Dorsolateral prefrontal cortex (tissue), 120 donors: ENCODE measurements at regions of chr14 and their contacts with region 1.

Region 1: DNA sequence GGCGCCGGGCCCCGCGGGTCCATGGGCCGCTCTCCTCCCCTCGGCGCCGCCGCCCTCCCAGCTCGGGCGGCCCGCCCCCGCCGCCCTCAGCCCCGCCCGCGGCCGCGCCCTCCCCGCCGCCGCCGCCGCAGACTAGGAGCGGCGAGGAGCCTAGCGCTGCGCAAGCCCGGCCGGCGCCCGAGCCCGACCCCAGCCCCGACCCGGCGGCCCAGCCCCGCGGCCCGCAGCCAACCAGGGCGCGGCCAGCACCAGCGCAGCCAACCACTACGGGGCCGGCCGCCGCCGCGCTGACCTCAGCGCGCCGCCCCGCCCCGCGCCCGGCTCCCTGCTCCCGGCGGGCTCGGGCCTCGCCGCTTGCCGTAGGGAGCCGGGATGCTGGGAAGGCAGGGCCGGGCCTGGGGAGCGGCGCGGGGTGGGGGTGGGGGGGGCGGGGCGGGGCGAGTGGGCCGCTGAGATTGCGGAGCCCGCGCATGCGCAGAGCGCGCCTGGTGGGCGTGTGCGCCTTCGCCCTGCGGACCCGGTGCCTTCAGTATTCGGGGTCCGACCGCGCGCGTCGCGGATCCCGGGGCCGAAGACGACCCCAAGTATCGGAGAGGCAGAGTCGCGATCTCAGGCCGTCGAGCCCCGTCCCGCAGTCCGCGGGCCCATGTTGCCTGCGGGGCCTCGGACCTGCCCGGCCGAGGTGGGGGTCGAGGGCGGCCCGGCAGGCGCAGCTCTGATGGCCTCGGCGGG is at the start of gene CDC42BPB:
- DNase-seq: peak; percentile 64 to 93 (median 82)
- H3K4me3 ChIP-seq: peak within 1 kb of the TSS; percentile 81 to 100 (median 95)
- H3K27ac ChIP-seq: peak within 1 kb of the TSS; percentile 51 to 94 (median 86)
- H3K27me3 ChIP-seq: no peaks in the 10 kb centered on the region
- CTCF ChIP-seq: peak in 21 of 56 donors; percentile 5 to 40 (median 17)
- total RNA-seq, gene CDC42BPB: 112 to 178 (median 140) TPM

Region 2: DNA sequence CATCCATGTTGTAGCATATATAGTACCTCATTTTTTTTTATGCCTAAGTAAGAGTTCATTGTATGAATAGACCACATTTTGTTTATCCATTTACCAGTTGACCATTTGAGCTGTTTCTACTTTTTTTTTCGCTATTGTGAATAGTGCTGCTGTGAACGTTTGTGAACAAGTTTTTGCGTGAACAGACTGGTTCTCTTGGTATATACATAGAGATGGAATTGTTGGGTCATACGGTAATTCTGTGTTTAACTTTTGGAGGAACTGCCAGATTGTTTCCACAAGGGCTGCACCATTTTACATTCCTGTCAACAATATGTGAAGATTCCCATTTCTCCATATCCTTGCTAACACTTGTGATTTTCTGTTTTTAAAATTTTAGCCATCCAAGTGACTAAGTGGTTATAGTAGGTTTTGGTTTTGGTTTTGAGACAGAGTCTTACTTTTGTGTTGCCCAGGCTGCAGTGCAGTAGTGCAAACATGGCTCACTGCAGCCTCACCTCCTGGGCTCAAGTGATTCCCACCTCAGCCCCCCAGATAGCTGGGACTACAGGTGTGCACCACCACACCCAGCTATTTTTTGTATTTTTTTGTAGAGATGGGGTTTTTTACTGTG is 203.3 kb before region 1 on chr14:
- intact Hi-C with region 1: no loop called
- DNase-seq: no peak
- H3K4me3 ChIP-seq: no peak overlapping the region
- H3K27ac ChIP-seq: no peak overlapping the region
- H3K27me3 ChIP-seq: no peaks in the 10 kb centered on the region
- CTCF ChIP-seq: no peak

Region 3: DNA sequence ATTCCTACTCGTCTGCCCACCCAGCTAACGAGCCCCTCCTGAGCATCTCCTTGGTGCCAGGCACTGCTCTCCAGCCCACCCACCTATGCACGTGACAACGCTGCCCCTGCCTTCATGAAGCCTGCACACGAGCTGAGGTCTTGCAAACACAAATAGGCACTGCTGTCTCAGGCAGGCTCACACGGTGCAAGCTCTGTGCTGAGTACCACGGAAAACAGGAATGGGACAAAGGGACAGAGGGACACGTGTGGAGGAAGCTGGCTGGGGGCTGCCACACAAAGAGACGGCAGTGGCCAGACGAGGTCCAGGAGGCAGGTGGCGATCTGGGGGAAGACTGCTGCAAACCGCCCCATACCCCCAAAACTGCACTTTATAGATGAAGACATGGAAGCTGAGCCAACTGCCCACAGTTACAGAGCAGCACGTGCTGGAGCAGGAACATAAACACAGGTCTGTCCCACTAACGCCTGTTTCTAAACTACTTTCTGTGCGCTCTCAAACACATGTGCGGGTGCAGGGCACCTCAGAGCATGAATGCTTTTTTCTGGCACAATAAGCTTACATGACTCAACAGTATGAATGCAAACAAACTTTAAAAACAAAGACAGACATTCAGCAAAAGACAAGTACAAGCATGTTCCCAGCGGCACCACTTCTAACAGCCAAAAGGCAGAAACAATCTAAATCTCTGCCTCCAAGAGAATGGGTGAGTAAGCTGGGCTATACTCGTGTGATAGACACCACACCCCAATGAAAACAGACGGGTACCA is 70.5 kb before region 1 on chr14:
- intact Hi-C with region 1: loop called (anchors 1 to 5 kb)
- DNase-seq: peak in 1 of 10 donors; percentile 55
- H3K4me3 ChIP-seq: peak overlapping the region in 3 of 59 donors; percentile 4 to 25 (median 17)
- H3K27ac ChIP-seq: peak overlapping the region; percentile 1 to 89 (median 77)
- H3K27me3 ChIP-seq: no peaks in the 10 kb centered on the region
- CTCF ChIP-seq: peak in 1 of 56 donors; percentile 12

Region 4: DNA sequence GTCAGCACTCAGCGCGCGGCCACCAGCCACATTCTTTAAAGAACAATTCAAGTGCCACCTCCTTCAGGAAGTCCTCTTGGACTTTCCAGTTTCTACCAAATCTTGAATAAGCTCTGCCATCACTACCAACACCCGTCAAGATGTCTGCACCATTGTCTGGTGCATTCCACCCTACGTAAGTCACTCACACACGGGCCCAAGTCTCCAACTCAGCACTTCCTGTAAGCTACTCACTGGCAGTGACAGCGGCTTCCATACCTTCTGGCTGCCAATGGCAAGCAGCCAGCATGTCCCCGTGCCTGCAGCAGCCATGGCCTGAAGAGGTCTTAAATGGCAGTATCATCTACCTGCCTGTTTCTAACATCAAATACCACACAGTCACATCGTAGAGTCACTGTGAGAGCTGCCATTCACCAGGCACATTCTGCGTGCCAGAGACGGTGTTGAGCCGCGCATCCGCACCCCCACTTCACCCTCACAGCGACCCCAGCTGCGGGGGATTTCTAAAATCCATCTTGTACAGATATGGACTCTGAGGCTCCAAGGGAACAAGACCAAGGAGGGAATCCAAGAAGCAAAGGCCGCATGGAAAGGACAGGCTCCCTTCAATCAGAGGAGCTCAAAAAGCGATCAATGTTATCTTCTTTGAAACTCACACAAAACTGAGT is 48.5 kb before region 1 on chr14:
- intact Hi-C with region 1: loop called (anchors 5 kb)
- DNase-seq: peak in 2 of 10 donors; percentile 24 to 46
- H3K4me3 ChIP-seq: no peak overlapping the region
- H3K27ac ChIP-seq: peak overlapping the region in 44 of 59 donors; percentile 7 to 99 (median 94)
- H3K27me3 ChIP-seq: no peaks in the 10 kb centered on the region
- CTCF ChIP-seq: no peak

Region 5: DNA sequence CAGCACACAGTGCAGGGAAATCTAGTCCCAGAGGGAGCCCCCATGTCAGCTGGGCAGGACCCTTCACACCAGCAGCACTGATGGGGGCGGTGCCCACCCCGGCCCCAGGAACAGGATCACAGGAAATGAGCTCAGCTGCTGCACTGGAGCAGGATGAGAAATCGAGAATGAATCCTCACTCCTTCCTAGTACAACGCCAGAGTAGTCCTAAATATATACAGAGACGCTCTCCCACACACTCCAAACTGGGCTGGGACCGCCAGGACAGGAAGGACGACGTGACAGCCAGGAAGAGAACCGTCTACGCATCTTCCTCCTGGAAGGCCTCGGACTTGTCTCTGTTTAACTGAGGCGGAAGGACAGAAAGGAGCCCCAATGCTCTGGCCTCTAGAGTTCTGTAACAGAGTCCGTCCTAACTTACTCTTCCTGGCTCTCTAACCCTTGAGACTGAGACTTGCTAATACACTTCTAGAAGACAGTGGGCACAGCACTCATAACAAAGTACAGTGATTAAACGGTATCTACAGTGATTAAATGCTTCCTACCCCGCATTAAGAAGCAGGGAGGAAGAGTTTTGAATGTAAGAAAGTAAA is 33.6 kb before region 1 on chr14:
- intact Hi-C with region 1: loop called in 1 of 2 experiments (anchors 5 kb)
- DNase-seq: peak in 1 of 10 donors; percentile 49
- H3K4me3 ChIP-seq: peak overlapping the region in 12 of 59 donors; percentile 6 to 42 (median 11)
- H3K27ac ChIP-seq: peak overlapping the region in 56 of 59 donors; percentile 5 to 94 (median 80)
- H3K27me3 ChIP-seq: no peaks in the 10 kb centered on the region
- CTCF ChIP-seq: no peak

Region 6: DNA sequence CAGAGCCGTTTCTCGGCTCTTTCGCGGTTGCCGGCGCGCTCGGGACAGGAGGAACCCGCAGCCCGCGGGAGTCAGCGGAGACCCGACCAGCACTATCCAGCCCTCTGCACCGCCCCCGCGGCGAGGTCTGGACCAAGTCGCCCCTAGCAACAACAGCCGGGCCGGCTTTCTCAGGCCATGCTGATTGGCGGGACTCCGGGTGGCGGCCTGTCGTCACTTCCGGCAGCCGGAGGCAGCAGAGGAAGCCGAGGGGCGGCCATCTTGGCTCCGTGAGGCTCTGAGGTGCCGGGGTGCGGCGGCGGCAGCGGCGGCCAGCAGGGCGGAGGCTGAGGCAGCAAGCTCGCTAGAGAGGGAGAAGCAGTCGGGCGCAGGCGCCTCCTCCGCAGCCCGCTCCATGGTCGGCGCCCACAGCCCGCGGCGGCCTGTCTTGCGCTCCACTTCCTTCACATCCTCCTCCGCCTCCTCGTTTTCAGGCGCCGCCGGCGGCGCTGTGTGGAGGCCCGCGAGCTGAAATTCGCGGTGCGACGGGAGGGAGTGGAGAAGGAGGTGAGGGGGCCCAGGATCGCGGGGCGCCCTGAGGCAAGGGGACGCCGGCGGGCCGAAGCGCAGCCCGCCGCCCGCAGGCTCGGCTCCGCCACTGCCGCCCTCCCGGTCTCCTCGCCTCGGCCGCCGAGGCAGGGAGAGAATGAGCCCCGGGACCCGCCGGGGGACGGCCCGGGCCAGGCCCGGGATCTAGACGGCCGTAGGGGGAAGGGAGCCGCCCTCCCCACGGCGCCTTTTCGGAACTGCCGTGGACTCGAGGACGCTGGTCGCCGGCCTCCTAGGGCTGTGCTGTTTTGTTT is 327.8 kb after region 1 on chr14 and contains the start of gene MARK3:
- intact Hi-C with region 1: loop called in 1 of 2 experiments (anchors 5 kb)
- DNase-seq: peak; percentile 94 to 99 (median 98)
- H3K4me3 ChIP-seq: peak within 1 kb of the TSS; percentile 71 to 99 (median 91)
- H3K27ac ChIP-seq: peak within 1 kb of the TSS; percentile 93 to 100 (median 99)
- H3K27me3 ChIP-seq: no peaks in the 10 kb centered on the region
- CTCF ChIP-seq: peak in 42 of 56 donors; percentile 3 to 56 (median 31)
- total RNA-seq, gene MARK3: 106 to 189 (median 135) TPM

Region 7: DNA sequence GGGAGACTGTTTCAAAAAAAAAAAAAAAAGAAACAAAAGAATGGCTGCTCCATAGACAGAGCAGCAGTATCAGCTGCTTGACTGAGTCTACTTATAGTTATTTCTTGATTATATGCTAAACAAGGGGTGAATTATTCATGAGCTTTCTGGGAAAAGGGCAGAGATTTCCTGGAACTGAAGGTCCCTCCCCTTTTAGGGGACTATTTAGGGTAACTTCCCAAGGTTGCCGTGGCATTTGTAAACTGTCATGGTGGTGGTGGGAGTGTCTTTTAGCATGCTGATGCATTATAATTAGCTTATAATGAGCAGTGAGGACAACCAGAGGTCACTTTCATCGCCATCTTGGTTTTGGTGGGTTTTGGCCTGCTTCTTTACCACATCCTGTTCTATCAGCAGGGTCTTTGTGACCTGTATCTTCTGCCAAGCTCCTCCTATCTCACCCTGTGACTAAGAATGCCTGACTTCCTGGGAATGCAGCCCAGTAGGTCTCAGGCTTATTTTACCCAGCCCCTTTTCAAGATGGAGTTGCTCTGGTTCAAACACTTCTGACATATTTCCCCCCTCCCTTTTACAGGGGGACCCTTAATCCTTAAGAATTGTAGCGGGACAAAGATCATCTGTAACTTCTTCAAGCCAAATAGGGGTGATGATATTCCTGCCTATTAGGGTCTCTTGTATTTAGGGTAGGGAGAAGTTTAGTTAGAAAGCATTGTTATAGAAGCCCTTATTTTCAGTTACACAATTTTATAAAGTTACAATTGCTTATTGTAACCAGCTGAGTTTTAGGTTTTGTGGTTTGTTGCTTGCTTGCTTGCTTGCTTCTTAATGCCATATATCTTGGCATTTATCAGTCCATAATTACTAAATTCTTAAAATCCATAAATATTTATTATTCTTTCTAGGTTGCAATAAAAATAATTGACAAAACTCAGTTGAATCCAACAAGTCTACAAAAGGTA is 370.2 kb after region 1 on chr14:
- intact Hi-C with region 1: no loop called
- DNase-seq: no peak
- H3K4me3 ChIP-seq: no peak overlapping the region
- H3K27ac ChIP-seq: peak overlapping the region in 44 of 59 donors; percentile 1 to 87 (median 45)
- H3K27me3 ChIP-seq: no peaks in the 10 kb centered on the region
- CTCF ChIP-seq: no peak